HCT116 (cell line): ENCODE measurements at regions of chr10 and their contacts with region 1.

Region 1: DNA sequence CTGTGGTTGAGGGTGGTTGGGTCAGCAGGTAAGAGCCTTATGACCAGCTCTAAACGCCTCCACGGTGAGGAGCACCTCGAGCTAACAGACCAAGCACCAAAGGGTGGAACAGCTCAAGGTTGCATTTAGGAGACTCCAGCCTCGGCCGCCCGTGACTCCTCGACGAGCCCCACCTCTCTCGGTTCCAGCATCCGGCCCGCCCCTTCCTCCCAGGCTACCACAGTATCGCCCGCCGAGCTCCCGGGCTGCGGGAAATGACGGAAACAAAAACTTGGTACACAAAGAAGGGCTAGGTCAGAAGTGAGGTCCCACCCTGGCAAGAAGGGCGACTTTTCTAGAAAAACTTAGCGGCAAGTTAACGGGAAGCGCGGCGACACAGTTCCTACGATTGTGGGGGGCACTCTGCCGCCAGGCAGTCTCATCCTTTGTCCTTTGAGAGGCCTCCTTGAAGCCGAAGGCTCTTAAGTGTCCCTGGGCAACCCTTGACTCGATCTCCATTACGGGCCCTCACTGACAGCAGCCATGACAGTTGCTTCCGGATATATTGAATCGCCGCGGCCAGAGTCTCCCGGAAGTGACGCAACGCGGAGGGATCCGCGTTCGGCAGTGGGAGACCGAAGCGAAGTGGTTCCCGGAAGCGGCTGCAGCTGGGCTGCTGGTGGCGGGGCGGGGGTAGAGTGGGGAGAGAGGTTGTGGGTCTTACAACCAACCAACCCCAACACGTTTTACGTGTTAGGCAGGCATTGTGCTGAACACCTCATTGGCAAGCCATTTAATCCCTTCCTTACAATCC is 40.2 kb upstream of the ZNF518A start:
- DNase-seq: peak; percentile 85
- ATAC-seq: peak; percentile 91
- H3K4me3 ChIP-seq: peak overlapping the region; percentile 57 to 63
- H3K27ac ChIP-seq: peak overlapping the region; percentile 87
- H3K4me1 ChIP-seq: peaks cover 0 to 10% of the 10 kb centered on the region in 2 experiments; a peak in 2 of 4 replicates
- H3K27me3 ChIP-seq: no peaks in the 10 kb centered on the region
- CTCF ChIP-seq: no peak
- POLR2A ChIP-seq: peak; percentile 9
- RAD21 ChIP-seq: no peak

Region 2: DNA sequence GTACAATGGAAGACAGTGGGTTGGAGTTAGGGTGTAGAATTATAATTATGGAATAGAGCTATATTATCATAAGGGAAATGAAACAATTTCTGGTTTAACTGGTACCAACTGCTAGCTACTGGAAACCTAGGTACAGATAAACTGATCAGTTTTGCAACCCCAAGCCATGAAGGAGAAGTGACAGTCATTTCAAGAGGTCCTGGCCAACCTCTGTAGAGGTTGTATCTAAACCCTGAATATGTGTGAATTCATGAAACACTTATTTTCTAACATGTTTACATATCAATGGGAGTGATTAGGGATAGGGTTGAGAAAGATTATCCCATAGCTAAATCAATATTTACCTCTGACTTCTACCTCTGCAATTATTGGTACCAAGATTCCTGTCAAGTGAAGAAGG is 212.0 kb before region 1 on chr10:
- CTCF ChIA-PET with region 1: no interaction called
- POLR2A ChIA-PET with region 1: no interaction called
- RAD21 ChIA-PET with region 1: no interaction called
- intact Hi-C with region 1: no loop called
- DNase-seq: no peak
- ATAC-seq: no peak
- H3K4me3 ChIP-seq: no peak overlapping the region
- H3K27ac ChIP-seq: no peak overlapping the region
- H3K4me1 ChIP-seq: no peaks in the 10 kb centered on the region
- H3K27me3 ChIP-seq: no peaks in the 10 kb centered on the region
- CTCF ChIP-seq: no peak
- POLR2A ChIP-seq: no peak
- RAD21 ChIP-seq: no peak

Region 3: GRCh38 chr10:95998255-95998784 is 91.5 kb before region 1 on chr10:
- CTCF ChIA-PET with region 1: no interaction called
- POLR2A ChIA-PET with region 1: no interaction called
- RAD21 ChIA-PET with region 1: no interaction called
- intact Hi-C with region 1: no loop called
- DNase-seq: no peak
- ATAC-seq: no peak
- H3K4me3 ChIP-seq: no peak overlapping the region
- H3K27ac ChIP-seq: no peak overlapping the region
- H3K4me1 ChIP-seq: no peaks in the 10 kb centered on the region
- H3K27me3 ChIP-seq: no peaks in the 10 kb centered on the region
- CTCF ChIP-seq: no peak
- POLR2A ChIP-seq: no peak
- RAD21 ChIP-seq: no peak

Region 4: GRCh38 chr10:96118604-96119450 is 29.0 kb after region 1 on chr10:
- CTCF ChIA-PET with region 1: no interaction called
- POLR2A ChIA-PET with region 1: interaction called, 15 read pairs
- RAD21 ChIA-PET with region 1: no interaction called
- intact Hi-C with region 1: no loop called
- DNase-seq: peak; percentile 98
- ATAC-seq: peak; percentile 96
- H3K4me3 ChIP-seq: peak overlapping the region; percentile 49 to 64
- H3K27ac ChIP-seq: peak overlapping the region; percentile 73
- H3K4me1 ChIP-seq: peaks cover 27 to 38% of the 10 kb centered on the region in 2 experiments
- H3K27me3 ChIP-seq: no peaks in the 10 kb centered on the region
- CTCF ChIP-seq: no peak
- POLR2A ChIP-seq: peak; percentile 72
- RAD21 ChIP-seq: no peak

Region 5: GRCh38 chr10:96152437-96152836 is 62.6 kb after region 1 on chr10:
- CTCF ChIA-PET with region 1: no interaction called
- POLR2A ChIA-PET with region 1: no interaction called
- RAD21 ChIA-PET with region 1: no interaction called
- intact Hi-C with region 1: no loop called
- DNase-seq: no peak
- ATAC-seq: no peak
- H3K4me3 ChIP-seq: no peak overlapping the region
- H3K27ac ChIP-seq: no peak overlapping the region
- H3K4me1 ChIP-seq: no peaks in the 10 kb centered on the region
- H3K27me3 ChIP-seq: no peaks in the 10 kb centered on the region
- CTCF ChIP-seq: no peak
- POLR2A ChIP-seq: no peak
- RAD21 ChIP-seq: no peak